Ascending aorta (tissue), 2 donors: ENCODE measurements at regions of chr19 and their contacts with region 1.

Region 1: DNA sequence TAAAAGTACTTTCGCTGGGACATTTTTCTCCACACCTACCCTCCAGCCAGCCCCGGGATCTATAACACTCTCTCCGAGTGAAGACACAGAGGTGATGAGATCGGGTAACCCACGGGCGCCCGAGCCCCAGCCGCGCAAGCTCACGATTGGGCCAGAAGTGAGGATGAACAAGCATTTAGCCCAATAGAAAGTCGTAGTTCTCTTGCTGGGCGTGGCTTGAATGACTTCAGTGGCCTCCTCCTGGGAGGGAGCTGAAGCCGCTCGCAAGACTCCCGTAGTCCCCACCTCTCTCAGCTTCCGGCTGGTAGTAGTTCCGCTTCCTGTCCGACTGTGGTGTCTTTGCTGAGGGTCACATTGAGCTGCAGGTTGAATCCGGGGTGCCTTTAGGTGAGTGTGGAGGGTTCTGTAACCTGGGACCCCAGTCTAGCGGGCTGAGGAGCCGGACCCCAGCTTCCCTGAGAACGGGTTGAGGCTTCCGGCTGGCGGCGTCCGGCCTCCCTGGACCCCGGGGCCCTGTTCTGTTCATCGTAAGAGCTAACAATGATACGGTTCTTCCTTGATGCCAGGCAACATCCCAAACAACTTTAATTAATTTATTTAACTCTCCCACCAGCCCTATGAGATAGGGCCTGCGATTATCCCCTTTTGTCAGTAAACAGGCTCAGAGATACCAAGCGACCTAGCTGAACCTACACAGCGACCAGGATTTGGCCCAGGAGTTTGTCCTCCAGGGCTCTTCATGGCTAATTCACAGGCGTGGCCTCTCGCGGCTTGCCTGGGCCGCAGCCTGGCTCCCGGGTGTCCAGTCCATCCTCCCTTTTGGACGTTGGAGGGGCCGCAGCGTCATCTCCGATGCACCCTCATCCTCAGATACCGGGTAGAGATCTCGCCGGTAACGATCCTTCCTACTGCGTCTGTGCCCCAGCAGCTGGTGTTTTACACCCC is at the start of gene COX6B1:
- DNase-seq: peak; percentile 85 to 98
- H3K4me3 ChIP-seq: peak within 1 kb of the TSS; percentile 77 to 88
- H3K27ac ChIP-seq: peak within 1 kb of the TSS; percentile 76 to 83
- H3K4me1 ChIP-seq: peaks cover 0 to 25% of the 10 kb centered on the region in 2 donors
- H3K27me3 ChIP-seq: no peaks in the 10 kb centered on the region
- CTCF ChIP-seq: no peak
- total RNA-seq, gene COX6B1: 301 TPM

Region 2: GRCh38 chr19:35124098-35125060 is 523.9 kb before region 1 on chr19:
- intact Hi-C with region 1: loop called (anchors 10 kb)
- DNase-seq: peak; percentile 80 to 96
- H3K4me3 ChIP-seq: peak overlapping the region; percentile 56 to 64
- H3K27ac ChIP-seq: peak overlapping the region; percentile 80 to 85
- H3K4me1 ChIP-seq: peaks cover 8 to 13% of the 10 kb centered on the region in 2 donors
- H3K27me3 ChIP-seq: no peaks in the 10 kb centered on the region
- CTCF ChIP-seq: no peak

Region 3: GRCh38 chr19:35612559-35613321 is 35.5 kb before region 1 on chr19 and contains the start of gene HAUS5:
- intact Hi-C with region 1: loop called (anchors 1 kb)
- DNase-seq: peak; percentile 82 to 98
- H3K4me3 ChIP-seq: peak within 1 kb of the TSS; percentile 70 to 81
- H3K27ac ChIP-seq: peak within 1 kb of the TSS; percentile 64 to 76
- H3K4me1 ChIP-seq: peaks cover 0 to 8% of the 10 kb centered on the region in 2 donors
- H3K27me3 ChIP-seq: no peaks in the 10 kb centered on the region
- CTCF ChIP-seq: peak in 1 of 3 experiments; percentile 8
- total RNA-seq, gene HAUS5: 1.9 TPM

Region 4: DNA sequence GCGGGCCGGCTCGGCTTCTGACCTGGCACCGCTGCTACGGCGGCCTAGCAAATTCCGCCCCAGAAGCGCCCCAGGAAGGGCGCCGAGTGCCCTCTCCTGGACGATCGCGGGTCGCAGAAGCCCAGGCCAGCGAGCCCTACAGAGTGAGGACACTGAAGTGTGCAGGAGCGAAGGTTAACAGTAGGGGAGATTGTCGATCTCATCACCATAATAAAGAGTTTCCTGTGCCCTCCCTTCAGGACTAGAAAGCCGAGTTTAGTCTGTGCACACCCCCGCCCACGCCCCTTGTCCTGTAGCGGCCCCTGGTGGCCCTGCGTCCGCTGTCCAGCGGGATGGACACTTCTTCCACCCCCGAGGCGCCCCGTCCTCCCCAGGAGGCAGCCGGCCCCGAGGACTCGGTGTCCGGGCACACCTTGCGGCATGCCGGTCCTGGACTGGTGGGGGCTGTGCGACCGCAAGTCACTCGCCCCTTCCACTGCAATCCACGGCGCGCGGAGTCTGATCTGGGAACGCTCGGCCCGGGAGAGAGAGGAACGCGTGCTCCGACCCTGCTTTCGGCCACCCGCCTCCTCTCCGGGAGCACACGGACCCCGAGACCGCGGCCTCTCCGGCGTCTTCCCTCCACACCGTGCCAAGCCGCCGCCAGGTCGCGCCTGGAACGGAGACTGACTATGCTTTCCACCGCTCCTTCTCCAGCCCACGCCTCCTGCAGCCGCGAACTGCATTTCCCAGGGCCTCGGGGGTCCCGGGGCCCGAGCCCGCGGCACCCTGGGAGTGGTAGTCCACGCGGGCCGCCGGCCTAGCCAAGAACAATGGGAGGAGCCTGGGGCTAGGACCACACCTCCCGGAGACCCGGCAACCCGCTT is 68.7 kb after region 1 on chr19:
- intact Hi-C with region 1: loop called (anchors 1 kb)
- DNase-seq: peak; percentile 88 to 98
- H3K4me3 ChIP-seq: peak overlapping the region; percentile 79 to 95
- H3K27ac ChIP-seq: peak overlapping the region; percentile 85 to 86
- H3K4me1 ChIP-seq: peaks cover 7 to 19% of the 10 kb centered on the region in 2 donors
- H3K27me3 ChIP-seq: no peaks in the 10 kb centered on the region
- CTCF ChIP-seq: peak; percentile 92 to 95 (median 93)

Region 5: DNA sequence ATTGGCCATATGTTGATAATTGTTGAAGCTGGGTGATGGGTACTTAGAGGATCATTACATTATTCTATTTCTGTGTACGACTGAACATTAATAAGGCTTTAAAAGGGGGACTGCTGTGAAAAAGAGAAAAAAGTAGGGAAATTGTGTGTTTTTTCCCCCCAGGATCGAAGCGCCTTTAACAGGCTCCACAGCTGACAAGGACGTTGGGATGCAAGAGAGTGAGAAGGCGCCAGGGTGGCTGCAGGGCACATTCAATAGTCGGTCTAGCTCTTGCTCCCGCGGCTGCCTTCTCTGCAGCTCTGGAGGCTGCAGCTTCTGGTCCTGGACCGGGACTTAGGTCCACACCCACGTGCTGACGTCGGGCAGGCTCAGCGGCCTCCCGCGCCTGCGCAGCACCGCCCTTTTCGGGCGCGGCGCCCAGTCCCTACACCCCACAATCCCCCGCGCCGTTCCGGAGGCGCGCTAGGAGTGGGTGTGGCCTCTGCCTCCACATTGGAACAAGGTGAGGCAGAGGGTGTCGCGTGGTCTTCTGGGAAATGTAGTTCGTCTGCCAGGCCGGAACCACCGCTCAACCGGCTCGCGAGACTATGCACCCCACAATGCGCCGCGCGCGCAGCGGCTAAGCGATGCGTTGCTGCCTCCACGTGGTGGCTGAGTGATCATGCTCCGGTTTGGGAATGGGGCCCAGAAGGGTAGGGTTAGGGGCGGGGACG is 283.0 kb after region 1 on chr19:
- intact Hi-C with region 1: loop called (anchors 5 kb)
- DNase-seq: peak; percentile 98 to 100
- H3K4me3 ChIP-seq: peak overlapping the region in 1 of 2 donors; percentile 51
- H3K27ac ChIP-seq: peak overlapping the region in 1 of 2 donors; percentile 53
- H3K4me1 ChIP-seq: peaks cover 7 to 9% of the 10 kb centered on the region in 2 donors
- H3K27me3 ChIP-seq: no peaks in the 10 kb centered on the region
- CTCF ChIP-seq: peak; percentile 92 to 99 (median 93)